ENCODE measurements at regions of chr10 and their contacts with region 1.

Region 1: GRCh38 chr10:22340362-22341189 is 4.7 kb upstream of the SPAG6 start:
- DNase-seq: peak; percentile 58 to 64
- H3K4me3 ChIP-seq: peak overlapping the region; percentile 24 to 87 (median 72)
- H3K27ac ChIP-seq: peak overlapping the region; percentile 83 to 91 (median 89)
- H3K4me1 ChIP-seq: peaks cover 19 to 25% of the 10 kb centered on the region in 2 donors
- H3K27me3 ChIP-seq: peaks cover 76% of the 10 kb centered on the region
- CTCF ChIP-seq: peak in 1 of 6 experiments; percentile 7
- POLR2A ChIP-seq: peak in 1 of 2 donors; percentile 38

Region 2: GRCh38 chr10:22314852-22315251 is 25.7 kb before region 1 on chr10:
- intact Hi-C with region 1: loop called (anchors 5 kb)
- DNase-seq: no peak
- H3K4me3 ChIP-seq: no peak overlapping the region
- H3K27ac ChIP-seq: no peak overlapping the region
- H3K4me1 ChIP-seq: peaks cover 6% of the 10 kb centered on the region in 2 donors
- H3K27me3 ChIP-seq: peaks cover 4% of the 10 kb centered on the region
- CTCF ChIP-seq: no peak
- POLR2A ChIP-seq: no peak

Region 3: GRCh38 chr10:22436884-22437619 is 96.5 kb after region 1 on chr10:
- intact Hi-C with region 1: loop called (anchors 5 kb)
- DNase-seq: peak; percentile 86 to 87
- H3K4me3 ChIP-seq: peak overlapping the region; percentile 59 to 65 (median 64)
- H3K27ac ChIP-seq: peak overlapping the region; percentile 98 to 99 (median 98)
- H3K4me1 ChIP-seq: peaks cover 10 to 28% of the 10 kb centered on the region in 2 donors
- H3K27me3 ChIP-seq: no peaks in the 10 kb centered on the region
- CTCF ChIP-seq: peak in 1 of 6 experiments; percentile 13
- POLR2A ChIP-seq: peak in 1 of 2 donors; percentile 90

Region 4: GRCh38 chr10:22527520-22527919 is 186.9 kb after region 1 on chr10:
- intact Hi-C with region 1: no loop called
- DNase-seq: no peak
- H3K4me3 ChIP-seq: no peak overlapping the region
- H3K27ac ChIP-seq: no peak overlapping the region
- H3K4me1 ChIP-seq: no peaks in the 10 kb centered on the region
- H3K27me3 ChIP-seq: no peaks in the 10 kb centered on the region
- CTCF ChIP-seq: no peak
- POLR2A ChIP-seq: no peak